Activated CD4-positive, alpha-beta T cell treated with anti-CD3 and anti-CD28 coated beads, Interleukin-2, amount 10 ng/mL, durations not matched to agents 24 days and 14 days (primary cell): ENCODE measurements at regions of chr10 and their contacts with region 1.

Region 1: GRCh38 chr10:59625721-59626522 is 83.7 kb downstream of the SLC16A9 start:
- DNase-seq: peak; percentile 86
- H3K4me3 Mint-ChIP-seq: no peak overlapping the region
- H3K27ac Mint-ChIP-seq: no peak overlapping the region
- H3K4me1 Mint-ChIP-seq: peaks cover 2% of the 10 kb centered on the region
- H3K27me3 Mint-ChIP-seq: peaks cover 8% of the 10 kb centered on the region

Region 2: DNA sequence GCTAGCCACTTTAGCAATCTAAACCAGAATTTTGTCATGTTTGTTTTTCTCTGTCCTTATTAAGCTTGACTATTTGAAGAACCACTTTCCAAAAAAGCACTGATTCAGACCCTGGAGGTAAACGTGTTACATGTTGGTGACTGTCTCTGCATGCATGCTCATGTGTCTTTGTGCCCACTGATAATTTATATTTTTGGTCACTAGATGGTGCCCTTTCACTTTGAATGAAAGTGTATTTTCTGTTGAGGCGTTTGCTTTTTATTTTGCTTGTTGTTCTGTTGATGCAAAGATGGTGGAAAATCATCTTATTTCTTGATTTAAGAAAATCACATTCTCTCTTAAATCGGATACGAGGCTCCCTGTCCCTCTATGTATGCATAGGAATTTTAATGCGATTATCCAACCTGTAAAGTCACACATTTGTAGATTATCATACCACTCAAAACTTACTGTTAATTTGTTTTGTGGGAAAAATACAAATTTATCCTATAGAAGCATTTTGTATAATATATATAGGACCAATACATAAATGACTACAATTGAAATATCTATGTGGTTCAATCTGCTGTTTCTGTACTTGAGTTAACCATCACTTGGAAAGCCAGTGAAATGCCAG is 843.9 kb before region 1 on chr10:
- intact Hi-C with region 1: loop called (anchors 2 kb)
- DNase-seq: peak; percentile 62
- H3K4me3 Mint-ChIP-seq: no peak overlapping the region
- H3K27ac Mint-ChIP-seq: no peak overlapping the region
- H3K4me1 Mint-ChIP-seq: no peaks in the 10 kb centered on the region
- H3K27me3 Mint-ChIP-seq: no peaks in the 10 kb centered on the region

Region 3: DNA sequence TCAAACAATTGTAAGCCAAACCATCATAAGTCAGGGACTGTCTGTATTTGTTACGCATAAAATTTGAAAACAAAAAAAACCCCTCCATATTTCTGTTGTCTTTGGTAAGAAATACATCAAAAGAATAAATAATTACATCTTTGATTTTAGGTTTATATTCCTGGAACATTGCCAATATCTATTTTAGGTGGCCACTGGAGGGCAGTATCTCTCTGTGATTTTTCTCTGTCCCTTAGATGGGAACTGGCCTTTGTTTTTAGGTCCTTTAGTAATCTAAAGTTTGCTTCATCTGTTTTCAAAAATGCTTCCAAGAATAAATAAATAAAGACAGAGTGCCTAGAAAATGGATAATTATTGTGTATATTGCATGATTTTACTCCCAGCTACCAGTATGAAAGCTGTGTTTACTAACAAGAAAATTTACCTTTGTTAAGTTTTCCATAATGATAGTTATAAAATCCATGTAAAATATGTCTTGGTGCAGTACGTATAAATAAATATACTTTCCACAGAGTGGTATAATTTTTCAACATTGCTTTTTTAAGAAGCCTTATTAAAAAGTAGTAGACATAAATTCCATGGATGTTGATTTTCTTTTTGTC is 385.2 kb before region 1 on chr10:
- intact Hi-C with region 1: loop called (anchors 5 kb)
- DNase-seq: no peak
- H3K4me3 Mint-ChIP-seq: no peak overlapping the region
- H3K27ac Mint-ChIP-seq: no peak overlapping the region
- H3K4me1 Mint-ChIP-seq: no peaks in the 10 kb centered on the region
- H3K27me3 Mint-ChIP-seq: peaks cover 2% of the 10 kb centered on the region

Region 4: GRCh38 chr10:59654007-59654406 is 28.1 kb after region 1 on chr10:
- intact Hi-C with region 1: no loop called
- DNase-seq: peak; percentile 57
- H3K4me3 Mint-ChIP-seq: peak overlapping the region; percentile 34
- H3K27ac Mint-ChIP-seq: peak overlapping the region; percentile 22
- H3K4me1 Mint-ChIP-seq: peaks cover 8% of the 10 kb centered on the region
- H3K27me3 Mint-ChIP-seq: no peaks in the 10 kb centered on the region

Region 5: GRCh38 chr10:60032723-60033122 is 406.8 kb after region 1 on chr10:
- intact Hi-C with region 1: loop called (anchors 1 kb)
- DNase-seq: peak; percentile 79
- H3K4me3 Mint-ChIP-seq: no peak overlapping the region
- H3K27ac Mint-ChIP-seq: no peak overlapping the region
- H3K4me1 Mint-ChIP-seq: peaks cover 6% of the 10 kb centered on the region
- H3K27me3 Mint-ChIP-seq: no peaks in the 10 kb centered on the region

Region 6: DNA sequence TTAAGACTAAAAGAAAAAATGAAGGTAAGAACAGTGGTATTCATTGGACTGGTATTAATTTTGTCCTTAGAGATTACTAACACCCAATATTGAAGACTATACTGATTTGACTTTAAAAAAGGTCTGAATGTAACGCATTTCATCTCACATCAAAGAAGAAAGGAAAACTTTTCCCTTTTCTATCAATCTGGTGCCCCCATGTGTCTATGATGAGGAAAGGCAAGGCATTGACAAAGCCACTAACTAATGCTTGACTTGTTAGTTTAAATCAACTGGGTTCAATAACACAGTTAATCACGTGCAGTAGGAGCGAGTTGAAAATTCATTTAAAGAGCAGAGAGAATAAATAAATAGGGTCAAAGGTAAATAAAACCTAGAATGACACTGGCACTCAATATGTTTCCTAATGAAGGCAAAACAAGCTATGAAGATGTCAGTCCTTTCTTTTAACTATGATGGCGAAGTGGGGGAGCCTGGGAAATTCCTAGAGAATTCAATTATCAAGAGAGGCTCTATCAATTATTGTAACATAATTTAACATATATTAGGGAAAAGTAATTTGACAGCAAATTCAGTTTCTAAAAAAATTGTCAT is 582.9 kb after region 1 on chr10:
- intact Hi-C with region 1: loop called (anchors 10 kb)
- DNase-seq: no peak
- H3K4me3 Mint-ChIP-seq: no peak overlapping the region
- H3K27ac Mint-ChIP-seq: peak overlapping the region; percentile 54
- H3K4me1 Mint-ChIP-seq: peaks cover 31% of the 10 kb centered on the region
- H3K27me3 Mint-ChIP-seq: no peaks in the 10 kb centered on the region